ENCODE measurements at regions of chr10 and their contacts with region 1.

Region 1: GRCh38 chr10:26881600-26882331 is 21.0 kb upstream of the ABI1 start:
- DNase-seq: peak in 1 of 2 donors; percentile 70
- ATAC-seq: peak; percentile 71 to 93 (median 81)
- H3K4me3 ChIP-seq: no peak overlapping the region
- H3K4me3 Mint-ChIP-seq: no peak overlapping the region
- H3K27ac ChIP-seq: no peak overlapping the region
- H3K27ac Mint-ChIP-seq: no peak overlapping the region
- H3K4me1 ChIP-seq: no peaks in the 10 kb centered on the region
- H3K4me1 Mint-ChIP-seq: no peaks in the 10 kb centered on the region
- H3K27me3 ChIP-seq: peaks cover 6% of the 10 kb centered on the region
- H3K27me3 Mint-ChIP-seq: peaks cover 14 to 40% of the 10 kb centered on the region in 2 donors
- CTCF ChIP-seq: peak; percentile 80

Region 2: DNA sequence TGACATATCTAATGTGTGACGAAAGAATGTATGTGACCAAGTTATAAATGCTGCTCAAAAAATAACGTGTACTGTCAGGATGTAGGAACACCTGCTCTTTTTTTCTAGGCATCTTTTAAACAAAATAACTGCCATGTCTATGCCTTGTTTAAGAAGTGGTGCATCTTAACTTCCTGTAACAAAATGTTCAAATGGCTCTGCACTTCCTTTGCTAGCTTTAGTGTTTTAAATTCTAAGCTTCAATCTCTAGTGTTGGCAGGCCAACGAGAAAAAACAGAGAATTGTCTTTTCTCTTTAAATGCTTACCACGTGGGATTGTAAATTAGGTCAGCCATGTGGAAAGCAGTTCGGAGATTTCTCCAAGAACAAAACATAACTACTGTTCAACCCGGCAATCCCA is 198.8 kb before region 1 on chr10:
- intact Hi-C with region 1: loop called (anchors 1 kb)
- DNase-seq: peak in 1 of 2 donors; percentile 67
- ATAC-seq: no peak
- H3K4me3 ChIP-seq: no peak overlapping the region
- H3K4me3 Mint-ChIP-seq: no peak overlapping the region
- H3K27ac ChIP-seq: no peak overlapping the region
- H3K27ac Mint-ChIP-seq: no peak overlapping the region
- H3K4me1 ChIP-seq: no peaks in the 10 kb centered on the region
- H3K4me1 Mint-ChIP-seq: peaks cover 0 to 5% of the 10 kb centered on the region in 2 donors
- H3K27me3 ChIP-seq: no peaks in the 10 kb centered on the region
- H3K27me3 Mint-ChIP-seq: peaks cover 5 to 9% of the 10 kb centered on the region in 2 donors
- CTCF ChIP-seq: no peak

Region 3: DNA sequence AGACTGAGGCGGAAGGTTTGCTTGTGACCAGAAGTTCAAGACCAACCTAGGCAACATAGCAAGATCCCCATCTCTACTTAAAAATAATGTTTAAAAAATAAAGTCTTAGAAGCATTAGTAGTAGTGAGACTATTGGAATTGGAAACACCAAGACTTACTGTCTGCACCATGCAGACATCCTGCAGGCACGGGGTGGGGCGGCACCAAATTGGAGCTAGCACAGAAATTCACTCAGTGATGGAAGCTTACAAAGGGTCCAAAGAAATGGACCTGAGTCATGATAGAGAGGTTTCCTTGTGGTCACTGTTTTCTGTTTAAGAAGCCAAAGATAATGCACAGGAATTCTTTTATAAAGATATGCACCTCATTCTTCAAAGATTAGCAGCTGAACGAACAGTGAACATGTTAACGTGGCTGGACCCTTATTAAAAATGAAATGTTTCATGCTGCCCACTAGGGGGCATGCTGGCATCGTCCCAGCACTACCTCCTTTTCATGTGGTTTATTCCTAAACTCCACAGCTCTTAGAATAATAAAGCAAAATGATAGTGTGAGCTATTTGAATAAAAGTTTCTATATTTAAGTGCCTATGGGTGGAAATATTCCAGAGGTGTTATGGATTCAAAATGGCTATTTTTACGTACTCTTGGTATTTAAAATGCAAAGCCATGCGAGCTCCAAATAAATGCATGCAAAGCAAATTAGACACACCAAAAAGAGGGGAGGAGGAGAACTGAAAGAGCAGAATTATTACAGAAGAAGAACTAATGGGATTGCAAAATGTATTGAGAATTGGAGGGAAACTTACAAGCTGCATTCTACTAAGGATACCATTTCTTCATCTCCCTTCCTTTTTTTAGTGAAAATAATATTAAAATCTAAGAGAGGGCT is 155.7 kb before region 1 on chr10:
- intact Hi-C with region 1: loop called (anchors 1 kb)
- DNase-seq: peak in 1 of 2 donors; percentile 81
- ATAC-seq: peak in 2 of 3 donors; percentile 42 to 45
- H3K4me3 ChIP-seq: no peak overlapping the region
- H3K4me3 Mint-ChIP-seq: no peak overlapping the region
- H3K27ac ChIP-seq: no peak overlapping the region
- H3K27ac Mint-ChIP-seq: no peak overlapping the region
- H3K4me1 ChIP-seq: peaks cover 14% of the 10 kb centered on the region
- H3K4me1 Mint-ChIP-seq: peaks cover 14% of the 10 kb centered on the region in 2 donors
- H3K27me3 ChIP-seq: no peaks in the 10 kb centered on the region
- H3K27me3 Mint-ChIP-seq: no peaks in the 10 kb centered on the region
- CTCF ChIP-seq: peak; percentile 95

Region 4: DNA sequence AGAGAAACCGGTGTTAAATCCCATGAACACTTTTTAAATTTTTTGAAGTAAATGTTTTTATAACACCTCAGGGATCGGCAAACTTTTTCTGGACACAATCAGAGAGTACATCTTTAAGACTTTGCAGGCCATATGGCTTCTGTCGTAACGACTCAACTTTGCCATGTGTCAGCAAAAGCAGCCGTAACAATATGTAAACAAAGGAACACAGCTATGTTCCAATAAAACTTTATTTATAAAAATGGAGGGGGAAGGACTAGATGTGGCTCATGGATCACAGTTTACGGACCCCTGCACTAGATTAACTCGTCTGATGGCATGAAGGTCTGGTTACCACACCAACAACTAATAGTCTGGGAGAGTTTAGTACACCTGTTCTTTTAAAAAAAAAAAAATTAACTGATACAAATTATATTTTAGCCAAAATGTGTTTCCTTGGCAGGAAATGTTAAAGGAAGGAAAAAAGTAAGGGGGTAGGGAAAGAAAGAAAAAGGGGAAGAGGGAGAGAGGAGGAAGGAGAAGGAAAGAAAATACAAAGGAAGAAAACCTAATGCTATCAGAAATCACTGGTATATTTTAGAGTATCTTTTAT is 71.2 kb before region 1 on chr10:
- intact Hi-C with region 1: no loop called
- DNase-seq: no peak
- ATAC-seq: no peak
- H3K4me3 ChIP-seq: no peak overlapping the region
- H3K4me3 Mint-ChIP-seq: no peak overlapping the region
- H3K27ac ChIP-seq: no peak overlapping the region
- H3K27ac Mint-ChIP-seq: peak overlapping the region in 1 of 2 donors; percentile 41
- H3K4me1 ChIP-seq: peaks cover 9% of the 10 kb centered on the region
- H3K4me1 Mint-ChIP-seq: peaks cover 53 to 58% of the 10 kb centered on the region in 2 donors
- H3K27me3 ChIP-seq: no peaks in the 10 kb centered on the region
- H3K27me3 Mint-ChIP-seq: no peaks in the 10 kb centered on the region
- CTCF ChIP-seq: no peak

Measured in natural killer cell (primary cell).